PC-9 (cell line): ENCODE measurements at regions of chr7 and their contacts with region 1.

Region 1: DNA sequence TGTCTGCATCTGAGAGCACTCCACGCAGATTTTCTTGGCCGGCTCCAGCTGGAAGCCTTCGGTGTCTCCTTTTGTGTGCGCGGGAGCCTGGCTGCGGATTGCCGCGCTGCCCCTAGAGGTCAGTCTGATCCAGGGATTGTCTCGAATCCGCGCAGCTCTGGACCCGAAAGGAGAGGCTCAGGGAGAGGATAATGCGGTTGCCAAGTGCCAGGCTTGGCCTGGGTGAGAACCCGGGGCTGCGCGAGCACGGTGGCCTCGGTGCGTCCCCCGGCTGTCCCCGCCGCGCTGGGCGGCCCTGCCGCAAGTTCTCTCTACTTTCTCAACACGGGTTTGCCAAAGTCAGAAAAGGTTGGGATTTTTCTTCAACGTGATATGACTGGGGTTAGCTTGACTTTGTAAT is 140.9 kb downstream of the ADCYAP1R1 start:
- DNase-seq: peak in 1 of 2 experiments; percentile 52
- H3K4me3 ChIP-seq: no peak overlapping the region
- H3K27ac ChIP-seq: no peak overlapping the region
- H3K4me1 ChIP-seq: no peaks in the 10 kb centered on the region
- H3K27me3 ChIP-seq: peaks cover 26% of the 10 kb centered on the region
- CTCF ChIP-seq: peak; percentile 81

Region 2: GRCh38 chr7:30613366-30614325 is 579.3 kb before region 1 on chr7:
- CTCF ChIA-PET with region 1: no interaction called
- POLR2A ChIA-PET with region 1: no interaction called
- intact Hi-C with region 1: no loop called
- DNase-seq: no peak
- H3K4me3 ChIP-seq: no peak overlapping the region
- H3K27ac ChIP-seq: peak overlapping the region; percentile 5; the same call in 1 of the 2 replicates
- H3K4me1 ChIP-seq: no peaks in the 10 kb centered on the region
- H3K27me3 ChIP-seq: no peaks in the 10 kb centered on the region
- CTCF ChIP-seq: no peak

Region 3: DNA sequence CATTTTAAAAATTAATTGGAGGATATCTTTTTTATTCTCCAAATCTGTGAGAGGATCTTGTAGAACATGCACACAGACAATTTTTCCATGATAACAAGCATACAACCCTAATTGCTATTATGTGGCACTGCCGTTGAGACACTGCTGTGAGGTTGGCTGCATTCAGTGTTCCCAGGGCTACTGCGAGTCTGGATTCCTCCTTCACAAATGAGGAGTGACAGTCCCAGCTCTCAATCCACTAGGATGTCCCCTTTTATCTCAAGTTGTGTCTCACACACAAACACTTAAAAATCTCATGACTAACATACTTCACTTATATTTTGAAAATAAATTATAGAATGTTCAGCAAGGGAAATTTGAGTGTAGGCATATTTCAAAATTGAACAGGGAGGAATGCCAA is 133.4 kb after region 1 on chr7:
- CTCF ChIA-PET with region 1: interaction called, 11 read pairs
- POLR2A ChIA-PET with region 1: no interaction called
- intact Hi-C with region 1: no loop called
- DNase-seq: no peak
- H3K4me3 ChIP-seq: no peak overlapping the region
- H3K27ac ChIP-seq: no peak overlapping the region
- H3K4me1 ChIP-seq: no peaks in the 10 kb centered on the region
- H3K27me3 ChIP-seq: peaks cover 21% of the 10 kb centered on the region; the same call in 1 of the 2 replicates
- CTCF ChIP-seq: no peak

Region 4: DNA sequence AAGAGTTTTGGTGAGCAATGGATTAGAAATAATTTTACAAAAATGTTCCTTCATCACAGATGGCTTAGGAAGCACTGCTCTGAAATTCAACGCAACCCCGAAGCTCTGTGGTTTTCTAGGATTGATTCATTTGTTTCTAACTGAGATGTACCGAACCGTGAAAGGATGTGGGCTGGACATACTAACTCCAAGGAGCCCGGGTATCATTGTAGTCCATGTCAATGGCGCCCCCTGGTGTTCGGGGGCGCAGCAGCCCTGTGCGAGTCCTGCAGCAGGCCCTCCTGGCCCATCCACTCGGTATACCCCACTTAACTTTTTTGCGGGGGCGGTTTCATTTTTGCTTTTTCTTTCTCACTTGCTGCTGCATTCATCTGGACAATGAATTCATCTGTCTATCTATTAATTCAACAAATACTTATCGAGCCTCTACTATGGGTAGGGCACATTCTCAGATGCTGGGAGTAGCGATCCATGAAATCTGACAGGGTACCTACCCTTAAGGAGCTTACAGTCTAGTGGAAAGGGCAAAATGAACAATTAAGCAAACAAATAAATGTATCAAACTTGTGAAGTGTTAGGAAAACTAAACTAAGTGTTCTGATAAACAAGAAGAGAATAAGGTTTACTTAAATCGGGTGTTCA is 295.7 kb after region 1 on chr7:
- CTCF ChIA-PET with region 1: no interaction called
- POLR2A ChIA-PET with region 1: no interaction called
- intact Hi-C with region 1: loop called (anchors 1 kb)
- DNase-seq: peak in 1 of 2 experiments; percentile 59
- H3K4me3 ChIP-seq: no peak overlapping the region
- H3K27ac ChIP-seq: no peak overlapping the region
- H3K4me1 ChIP-seq: no peaks in the 10 kb centered on the region
- H3K27me3 ChIP-seq: peaks cover 15% of the 10 kb centered on the region
- CTCF ChIP-seq: peak; percentile 91

Region 5: GRCh38 chr7:31633894-31634494 is 441.0 kb after region 1 on chr7:
- CTCF ChIA-PET with region 1: interaction called, 6 read pairs
- POLR2A ChIA-PET with region 1: no interaction called
- intact Hi-C with region 1: loop called (anchors 1 kb)
- DNase-seq: peak; percentile 50 to 53
- H3K4me3 ChIP-seq: no peak overlapping the region
- H3K27ac ChIP-seq: no peak overlapping the region
- H3K4me1 ChIP-seq: no peaks in the 10 kb centered on the region
- H3K27me3 ChIP-seq: peaks cover 23% of the 10 kb centered on the region
- CTCF ChIP-seq: peak; percentile 74

Region 6: GRCh38 chr7:31735991-31736982 is 543.3 kb after region 1 on chr7:
- CTCF ChIA-PET with region 1: no interaction called
- POLR2A ChIA-PET with region 1: no interaction called
- intact Hi-C with region 1: loop called (anchors 1 kb)
- DNase-seq: peak; percentile 42 to 51
- H3K4me3 ChIP-seq: no peak overlapping the region
- H3K27ac ChIP-seq: no peak overlapping the region
- H3K4me1 ChIP-seq: no peaks in the 10 kb centered on the region
- H3K27me3 ChIP-seq: peaks cover 44% of the 10 kb centered on the region
- CTCF ChIP-seq: peak; percentile 95